Activated naive CD4-positive, alpha-beta T cell treated with anti-CD3 and anti-CD28 coated beads for 36 hours (primary cell): ENCODE measurements at regions of chr15 and their contacts with region 1.

Region 1: DNA sequence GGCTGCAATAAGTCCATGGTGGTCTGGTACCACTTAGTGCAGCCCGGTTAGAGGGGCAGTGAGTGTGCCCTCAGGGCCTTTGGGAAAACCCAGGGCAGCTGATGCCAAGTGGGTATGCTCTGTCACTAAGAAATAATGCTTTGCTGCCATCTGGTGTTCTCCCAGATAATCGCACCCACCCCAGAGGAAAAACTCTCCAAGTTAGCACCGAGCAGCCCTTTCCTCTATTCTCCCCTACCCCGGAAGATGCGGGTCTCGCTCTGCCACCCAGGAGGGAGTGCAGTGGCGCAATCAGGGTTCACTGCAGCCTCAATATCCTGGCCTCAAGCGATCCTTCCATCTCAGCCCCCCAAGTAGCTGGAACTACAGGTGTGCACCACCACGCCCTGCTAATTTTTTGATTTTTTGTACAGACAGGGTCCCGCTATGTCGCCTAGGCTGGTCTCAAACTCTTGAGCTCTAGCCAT is 21.3 kb upstream of the DAPK2 start:
- DNase-seq: peak; percentile 81
- H3K4me3 Mint-ChIP-seq: no peak overlapping the region
- H3K27ac Mint-ChIP-seq: no peak overlapping the region
- H3K4me1 Mint-ChIP-seq: peaks cover 5% of the 10 kb centered on the region
- H3K27me3 Mint-ChIP-seq: no peaks in the 10 kb centered on the region

Region 2: GRCh38 chr15:63288778-63289378 is 778.7 kb before region 1 on chr15:
- CTCF ChIA-PET with region 1: interaction called, 3 read pairs
- intact Hi-C with region 1: loop called (anchors 2 kb)
- DNase-seq: no peak
- H3K4me3 Mint-ChIP-seq: no peak overlapping the region
- H3K27ac Mint-ChIP-seq: no peak overlapping the region
- H3K4me1 Mint-ChIP-seq: peaks cover 4% of the 10 kb centered on the region
- H3K27me3 Mint-ChIP-seq: no peaks in the 10 kb centered on the region

Region 3: GRCh38 chr15:63752075-63752684 is 315.4 kb before region 1 on chr15:
- CTCF ChIA-PET with region 1: interaction called, 24 read pairs
- intact Hi-C with region 1: loop called (anchors 1 kb)
- DNase-seq: peak; percentile 60
- H3K4me3 Mint-ChIP-seq: no peak overlapping the region
- H3K27ac Mint-ChIP-seq: no peak overlapping the region
- H3K4me1 Mint-ChIP-seq: no peaks in the 10 kb centered on the region
- H3K27me3 Mint-ChIP-seq: no peaks in the 10 kb centered on the region

Region 4: GRCh38 chr15:63891079-63891767 is 176.4 kb before region 1 on chr15:
- CTCF ChIA-PET with region 1: interaction called, 10 read pairs
- intact Hi-C with region 1: loop called (anchors 1 kb)
- DNase-seq: peak; percentile 86
- H3K4me3 Mint-ChIP-seq: no peak overlapping the region
- H3K27ac Mint-ChIP-seq: no peak overlapping the region
- H3K4me1 Mint-ChIP-seq: peaks cover 40% of the 10 kb centered on the region
- H3K27me3 Mint-ChIP-seq: no peaks in the 10 kb centered on the region

Region 5: DNA sequence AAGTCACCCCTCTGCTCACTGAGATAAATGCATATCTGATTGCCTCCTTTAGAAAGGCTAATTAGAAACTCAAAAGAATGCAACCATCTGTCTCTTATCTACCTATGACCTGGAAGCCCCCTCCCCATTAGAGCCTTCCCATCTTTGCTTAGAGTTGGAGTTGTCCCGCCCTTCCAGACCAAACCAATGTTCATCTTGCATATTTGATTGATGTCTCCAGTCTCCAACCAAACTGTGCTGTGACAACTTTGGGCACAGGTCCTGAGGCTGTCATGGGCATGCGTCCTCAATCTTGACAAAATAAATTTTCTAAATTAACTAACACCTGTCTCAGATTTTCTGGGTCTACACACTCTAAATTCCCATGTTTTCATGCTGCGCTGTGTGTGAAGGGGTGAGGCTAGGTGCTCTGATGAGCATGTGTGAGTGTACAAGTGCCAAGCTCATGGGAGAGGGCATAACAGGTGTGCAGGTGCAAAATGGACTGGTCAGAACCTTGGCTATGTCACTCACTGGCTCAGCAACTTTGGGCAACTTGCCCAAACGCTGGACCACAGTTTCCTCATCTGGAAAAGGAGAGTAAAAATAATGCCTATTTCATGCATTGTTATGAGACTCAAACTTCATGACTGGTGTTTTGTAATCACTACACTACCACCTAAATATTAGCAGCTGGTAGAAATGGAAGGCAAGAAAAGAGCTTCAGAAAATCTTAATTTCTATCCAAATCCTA is 28.6 kb before region 1 on chr15:
- CTCF ChIA-PET with region 1: interaction called, 21 read pairs
- intact Hi-C with region 1: no loop called
- DNase-seq: no peak
- H3K4me3 Mint-ChIP-seq: no peak overlapping the region
- H3K27ac Mint-ChIP-seq: no peak overlapping the region
- H3K4me1 Mint-ChIP-seq: no peaks in the 10 kb centered on the region
- H3K27me3 Mint-ChIP-seq: no peaks in the 10 kb centered on the region

Region 6: GRCh38 chr15:64284042-64284441 is 216.4 kb after region 1 on chr15:
- CTCF ChIA-PET with region 1: no interaction called
- intact Hi-C with region 1: no loop called
- DNase-seq: no peak
- H3K4me3 Mint-ChIP-seq: no peak overlapping the region
- H3K27ac Mint-ChIP-seq: no peak overlapping the region
- H3K4me1 Mint-ChIP-seq: peaks cover 4% of the 10 kb centered on the region
- H3K27me3 Mint-ChIP-seq: no peaks in the 10 kb centered on the region